Ovary (tissue), 10 donors: ENCODE measurements at regions of chr6 and their contacts with region 1.

Region 1: DNA sequence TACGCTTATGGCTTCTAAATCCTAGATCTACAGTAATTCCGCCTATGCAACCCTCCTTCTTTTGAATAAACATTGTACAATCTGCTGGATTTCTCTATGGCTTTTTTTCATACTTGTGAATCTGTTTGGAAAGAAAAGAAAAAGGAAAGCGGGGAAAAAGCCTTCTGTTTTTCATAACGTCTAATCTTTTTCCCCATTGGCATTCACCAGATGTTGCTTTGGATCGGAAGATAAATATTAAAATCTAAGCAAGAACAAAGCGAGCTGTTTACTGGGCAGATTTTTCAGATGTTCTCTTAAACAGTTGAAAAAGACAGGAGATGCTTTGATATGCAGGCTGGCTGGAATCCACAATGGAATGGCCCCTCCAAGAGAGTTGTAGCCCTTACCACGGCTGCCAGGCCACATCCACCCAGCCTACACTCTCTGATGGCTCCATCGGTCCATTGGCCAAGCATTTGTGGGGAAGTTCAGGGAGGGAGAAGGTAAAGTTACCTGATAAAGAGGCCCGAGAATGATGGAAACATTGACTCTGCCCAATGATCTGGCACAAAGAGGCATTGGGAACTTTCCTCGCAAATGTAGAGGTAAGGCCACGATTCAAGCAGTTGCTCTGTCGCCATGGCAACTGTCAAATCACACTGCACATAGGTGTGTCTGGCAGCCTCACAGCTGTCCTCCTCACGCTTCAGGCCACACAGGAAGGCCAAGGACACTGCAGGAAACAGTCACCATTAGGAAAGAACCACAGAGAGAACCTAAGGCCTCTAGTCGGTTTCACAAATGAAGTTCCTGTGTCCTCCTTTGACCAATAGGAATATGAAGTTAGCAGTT is 70.3 kb downstream of the PKHD1 start:
- DNase-seq: no peak
- H3K4me3 ChIP-seq: no peak overlapping the region
- H3K27ac ChIP-seq: no peak overlapping the region
- H3K4me1 ChIP-seq: no peaks in the 10 kb centered on the region
- H3K27me3 ChIP-seq: no peaks in the 10 kb centered on the region
- CTCF ChIP-seq: no peak
- EP300 ChIP-seq: no peak
- POLR2A ChIP-seq: no peak

Region 2: DNA sequence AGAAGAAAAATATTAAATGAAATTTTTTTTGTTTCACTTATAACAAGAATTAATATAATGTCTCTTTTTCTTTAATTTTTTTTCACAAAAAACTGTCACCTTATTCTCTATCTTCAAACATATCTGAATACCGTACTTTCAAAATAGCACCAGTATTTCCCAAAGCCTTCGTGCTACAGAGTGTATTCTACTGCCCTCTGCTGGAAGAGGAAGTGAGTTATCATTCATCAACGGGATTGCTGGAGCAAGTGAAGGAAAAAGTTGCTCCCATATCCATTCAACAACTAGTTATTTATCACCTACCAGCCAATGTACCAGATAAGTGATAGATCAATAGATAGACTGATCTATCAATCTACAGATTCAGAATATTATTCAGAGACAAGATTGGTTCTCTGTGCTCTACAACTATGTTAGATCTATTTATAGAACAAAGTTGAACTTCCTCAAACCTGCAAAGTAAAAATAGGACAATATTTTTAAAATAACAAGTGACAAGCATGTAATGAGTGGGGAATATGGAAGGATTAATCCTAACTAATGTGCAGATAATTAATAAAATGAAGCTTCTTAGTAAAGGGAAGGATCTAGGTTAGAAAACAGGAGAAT is 1225.1 kb before region 1 on chr6:
- intact Hi-C with region 1: loop called in 1 of 4 experiments (anchors 10 kb)
- DNase-seq: no peak
- H3K4me3 ChIP-seq: no peak overlapping the region
- H3K27ac ChIP-seq: no peak overlapping the region
- H3K4me1 ChIP-seq: no peaks in the 10 kb centered on the region
- H3K27me3 ChIP-seq: no peaks in the 10 kb centered on the region
- CTCF ChIP-seq: no peak
- EP300 ChIP-seq: no peak
- POLR2A ChIP-seq: no peak

Region 3: DNA sequence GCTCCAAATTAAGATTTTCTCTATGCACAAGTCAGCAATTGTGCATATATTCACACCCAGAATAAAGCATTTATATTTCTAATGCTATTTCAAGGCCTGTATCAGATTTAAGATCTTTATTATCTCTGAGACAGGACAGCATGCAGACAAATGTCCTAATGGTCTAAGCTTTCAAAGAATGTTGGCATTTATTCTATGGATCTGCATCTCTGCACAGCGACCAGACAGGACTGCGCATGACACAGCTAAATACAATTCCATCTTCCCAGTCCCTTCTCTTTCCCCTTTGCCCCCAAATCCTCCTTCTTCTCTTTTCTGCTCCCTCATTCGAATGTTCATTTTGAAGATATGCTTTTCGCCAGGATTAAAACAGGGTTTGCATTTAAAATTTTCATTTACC is 408.2 kb before region 1 on chr6:
- intact Hi-C with region 1: no loop called
- DNase-seq: no peak
- H3K4me3 ChIP-seq: no peak overlapping the region
- H3K27ac ChIP-seq: no peak overlapping the region
- H3K4me1 ChIP-seq: no peaks in the 10 kb centered on the region
- H3K27me3 ChIP-seq: no peaks in the 10 kb centered on the region
- CTCF ChIP-seq: no peak
- EP300 ChIP-seq: no peak
- POLR2A ChIP-seq: no peak

Region 4: GRCh38 chr6:52115891-52116604 is 98.9 kb after region 1 on chr6:
- intact Hi-C with region 1: no loop called
- DNase-seq: no peak
- H3K4me3 ChIP-seq: no peak overlapping the region
- H3K27ac ChIP-seq: no peak overlapping the region
- H3K4me1 ChIP-seq: no peaks in the 10 kb centered on the region
- H3K27me3 ChIP-seq: no peaks in the 10 kb centered on the region
- CTCF ChIP-seq: no peak
- EP300 ChIP-seq: no peak
- POLR2A ChIP-seq: no peak